Panc1 (cell line): ENCODE measurements at regions of chr2 and their contacts with region 1.

Region 1: GRCh38 chr2:56077352-56077915 is 106.4 kb upstream of the CCDC85A start:
- DNase-seq: no peak
- ATAC-seq: no peak
- H3K4me3 ChIP-seq: no peak overlapping the region
- H3K27ac ChIP-seq: no peak overlapping the region
- H3K4me1 ChIP-seq: no peaks in the 10 kb centered on the region
- H3K27me3 ChIP-seq: no peaks in the 10 kb centered on the region
- CTCF ChIP-seq: peak; percentile 74

Region 2: GRCh38 chr2:56132138-56132537 is 54.7 kb after region 1 on chr2:
- CTCF ChIA-PET with region 1: interaction called, 4 read pairs
- POLR2A ChIA-PET with region 1: no interaction called
- in situ Hi-C with region 1: no loop called
- intact Hi-C with region 1: loop called (anchors 1 kb)
- DNase-seq: peak; percentile 13
- ATAC-seq: no peak
- H3K4me3 ChIP-seq: no peak overlapping the region
- H3K27ac ChIP-seq: no peak overlapping the region
- H3K4me1 ChIP-seq: no peaks in the 10 kb centered on the region
- H3K27me3 ChIP-seq: no peaks in the 10 kb centered on the region; the same call in 1 of the 2 replicates
- CTCF ChIP-seq: peak; percentile 65; the same call in 1 of the 2 replicates

Region 3: DNA sequence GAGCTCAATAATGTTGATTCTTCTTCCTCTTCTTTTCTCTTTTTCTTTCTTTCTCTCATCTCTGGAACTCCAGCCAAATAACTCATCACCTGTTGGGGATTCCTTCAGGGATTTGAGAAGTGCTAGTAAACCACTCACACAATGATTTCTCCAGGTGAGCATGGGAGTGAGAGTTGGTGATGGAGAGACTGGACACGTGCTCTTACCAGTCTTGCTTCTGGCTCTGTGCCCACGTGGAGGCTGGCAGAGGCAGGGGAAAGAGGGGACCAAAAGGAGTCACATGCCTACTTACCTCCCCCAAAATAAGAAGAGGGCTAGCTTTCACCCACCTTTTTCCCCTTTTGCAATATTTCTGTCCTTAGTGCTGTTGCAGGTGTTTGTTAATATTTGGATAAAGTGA is 77.8 kb after region 1 on chr2:
- CTCF ChIA-PET with region 1: no interaction called
- POLR2A ChIA-PET with region 1: no interaction called
- in situ Hi-C with region 1: no loop called
- intact Hi-C with region 1: no loop called
- DNase-seq: no peak
- ATAC-seq: no peak
- H3K4me3 ChIP-seq: no peak overlapping the region
- H3K27ac ChIP-seq: no peak overlapping the region
- H3K4me1 ChIP-seq: no peaks in the 10 kb centered on the region
- H3K27me3 ChIP-seq: no peaks in the 10 kb centered on the region
- CTCF ChIP-seq: no peak

Region 4: DNA sequence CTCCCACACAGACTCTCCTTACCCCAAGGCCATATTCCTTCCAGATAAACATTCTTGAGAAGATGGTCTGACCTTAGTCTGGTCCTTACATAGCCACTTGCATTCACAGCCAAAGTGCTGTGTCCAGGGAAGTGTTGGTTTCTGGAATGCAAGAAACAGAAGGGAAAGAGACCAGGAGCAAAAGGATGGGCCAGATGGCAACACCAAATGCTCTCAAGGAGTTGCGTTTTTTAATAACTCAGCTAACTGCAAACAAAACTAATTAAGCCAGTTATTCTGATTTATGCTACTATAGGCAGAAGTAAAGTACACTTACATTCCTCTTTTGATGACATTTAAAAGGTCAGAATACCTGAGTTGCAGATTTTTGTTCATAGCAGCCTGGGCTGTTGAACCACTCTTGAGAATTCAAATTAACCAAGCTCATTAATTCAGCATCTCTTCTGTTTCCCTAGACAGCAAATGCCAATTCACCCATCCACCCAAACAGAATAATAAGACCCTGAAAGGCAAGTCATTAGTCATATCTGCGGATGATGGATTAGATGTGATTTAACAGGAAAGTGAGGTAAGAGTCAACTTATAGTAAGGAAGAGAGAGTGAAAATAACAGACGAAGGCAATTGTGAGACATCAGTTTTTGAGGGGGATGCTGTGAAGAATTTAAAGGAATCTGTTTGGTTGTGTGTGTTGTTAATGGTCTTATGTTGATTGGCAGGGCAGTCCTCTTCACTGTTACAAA is 125.1 kb after region 1 on chr2:
- CTCF ChIA-PET with region 1: no interaction called
- POLR2A ChIA-PET with region 1: no interaction called
- in situ Hi-C with region 1: no loop called
- intact Hi-C with region 1: no loop called
- DNase-seq: no peak
- ATAC-seq: no peak
- H3K4me3 ChIP-seq: no peak overlapping the region
- H3K27ac ChIP-seq: no peak overlapping the region
- H3K4me1 ChIP-seq: no peaks in the 10 kb centered on the region
- H3K27me3 ChIP-seq: peaks cover 2% of the 10 kb centered on the region; the same call in 1 of the 2 replicates
- CTCF ChIP-seq: no peak

Region 5: GRCh38 chr2:57516698-57517340 is 1439.4 kb after region 1 on chr2:
- CTCF ChIA-PET with region 1: no interaction called
- POLR2A ChIA-PET with region 1: no interaction called
- in situ Hi-C with region 1: no loop called
- intact Hi-C with region 1: loop called (anchors 5 kb)
- DNase-seq: peak; percentile 28
- ATAC-seq: no peak
- H3K4me3 ChIP-seq: no peak overlapping the region
- H3K27ac ChIP-seq: no peak overlapping the region
- H3K4me1 ChIP-seq: no peaks in the 10 kb centered on the region; the same call in 1 of the 2 replicates
- H3K27me3 ChIP-seq: no peaks in the 10 kb centered on the region
- CTCF ChIP-seq: peak; percentile 55; the same call in 1 of the 2 replicates